ENCODE measurements at regions of chr7 and their contacts with region 1.

Region 1: DNA sequence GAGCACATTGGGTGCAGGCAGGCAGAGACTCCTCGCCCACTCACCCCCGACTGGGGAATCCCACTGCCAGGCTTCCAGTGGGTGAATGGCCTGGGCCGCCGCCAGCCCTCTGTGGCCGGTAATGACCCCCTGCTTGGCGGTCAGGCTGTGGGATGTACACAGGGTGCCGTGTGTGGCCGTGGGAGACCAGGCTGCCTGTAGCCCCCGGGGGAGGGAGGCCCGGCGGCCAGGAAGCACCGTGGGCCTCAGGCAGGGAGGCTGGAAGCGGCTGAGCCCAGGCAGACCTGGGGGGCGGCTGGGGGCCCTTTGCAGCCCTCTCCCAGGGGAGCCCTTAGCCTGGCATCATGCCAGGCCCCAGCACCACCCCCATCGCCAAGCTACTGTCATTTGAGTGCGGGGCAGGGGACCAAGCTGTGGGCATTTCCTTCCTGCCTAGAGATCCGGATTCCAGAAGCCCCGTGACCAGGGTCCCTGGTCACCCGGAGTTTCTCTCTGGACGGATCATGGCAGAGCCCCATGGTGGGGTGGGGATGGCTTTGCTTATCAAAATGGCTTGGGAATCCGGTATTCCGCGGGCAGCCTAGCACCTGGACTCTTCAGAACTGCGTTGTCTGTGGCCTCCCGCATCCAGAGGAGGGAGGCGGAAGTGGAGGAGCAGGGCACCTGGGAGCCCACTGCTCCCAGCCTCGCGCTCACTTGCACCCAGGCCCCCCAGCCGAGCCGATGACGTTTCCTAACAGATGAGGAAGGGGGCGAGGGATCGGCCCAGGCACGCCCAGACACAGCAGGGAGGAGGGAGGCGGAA is 1.1 kb downstream of the TTYH3 start:
- DNase-seq: peak in 8 of 14 experiments; percentile 18 to 65 (median 46)
- ATAC-seq: peak; percentile 9
- H3K4me3 ChIP-seq: peak overlapping the region; percentile 85
- H3K4me3 Mint-ChIP-seq: peak overlapping the region; percentile 92
- H3K27ac ChIP-seq: no peak overlapping the region
- H3K27ac Mint-ChIP-seq: peak overlapping the region; percentile 66
- H3K4me1 ChIP-seq: peaks cover 34% of the 10 kb centered on the region
- H3K4me1 Mint-ChIP-seq: peaks cover 20% of the 10 kb centered on the region
- H3K27me3 ChIP-seq: no peaks in the 10 kb centered on the region
- H3K27me3 Mint-ChIP-seq: no peaks in the 10 kb centered on the region
- CTCF ChIP-seq: no peak

Region 2: GRCh38 chr7:2403014-2403717 is 229.8 kb before region 1 on chr7 and contains the start of gene CHST12:
- CTCF ChIA-PET with region 1: no interaction called
- POLR2A ChIA-PET with region 1: no interaction called
- intact Hi-C with region 1: loop called in 1 of 2 experiments (anchors 5 kb)
- DNase-seq: peak; percentile 90 to 99 (median 93)
- ATAC-seq: peak; percentile 76
- H3K4me3 ChIP-seq: peak within 1 kb of the TSS; percentile 76
- H3K4me3 Mint-ChIP-seq: peak within 1 kb of the TSS; percentile 88
- H3K27ac ChIP-seq: peak within 1 kb of the TSS; percentile 35 to 38
- H3K27ac Mint-ChIP-seq: peak within 1 kb of the TSS; percentile 82
- H3K4me1 ChIP-seq: peaks cover 57% of the 10 kb centered on the region
- H3K4me1 Mint-ChIP-seq: peaks cover 54% of the 10 kb centered on the region
- H3K27me3 ChIP-seq: no peaks in the 10 kb centered on the region
- H3K27me3 Mint-ChIP-seq: no peaks in the 10 kb centered on the region
- CTCF ChIP-seq: no peak
- total RNA-seq, gene CHST12: 6.6 to 8.6 TPM

Region 3: DNA sequence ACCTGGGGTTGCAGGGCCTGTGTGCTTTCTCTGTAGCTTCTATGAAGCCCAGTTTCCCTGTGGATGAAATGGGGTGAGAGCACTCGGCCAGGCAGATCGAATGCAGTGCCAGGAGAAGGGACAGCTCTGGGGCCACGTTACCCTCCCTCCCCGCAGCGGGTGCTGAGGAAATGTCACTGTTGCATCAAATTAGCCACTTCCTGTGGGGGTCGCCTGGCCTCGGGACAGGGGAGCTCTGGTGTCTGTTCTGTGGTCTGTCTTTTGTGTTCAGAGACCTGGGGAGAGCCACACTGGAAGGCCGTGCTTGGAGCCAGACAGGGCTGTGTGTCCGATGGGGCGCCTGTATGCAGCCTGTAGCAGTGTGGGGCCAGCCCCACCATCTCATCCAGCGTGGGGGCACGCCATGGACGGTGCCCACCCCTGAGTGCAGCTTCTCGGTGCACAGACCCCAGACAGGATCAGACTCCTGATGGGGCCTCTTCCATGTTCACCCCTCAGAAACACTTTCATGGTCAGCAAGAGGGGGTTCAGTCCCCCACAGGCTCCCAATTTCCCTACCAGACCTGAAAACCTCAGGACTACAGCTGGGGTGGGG is 12.4 kb after region 1 on chr7:
- CTCF ChIA-PET with region 1: no interaction called
- POLR2A ChIA-PET with region 1: interaction called, 10 read pairs
- intact Hi-C with region 1: no loop called
- DNase-seq: peak in 4 of 14 experiments; percentile 9 to 69 (median 37)
- ATAC-seq: peak; percentile 54
- H3K4me3 ChIP-seq: peak overlapping the region; percentile 28
- H3K4me3 Mint-ChIP-seq: peak overlapping the region; percentile 42
- H3K27ac ChIP-seq: no peak overlapping the region
- H3K27ac Mint-ChIP-seq: no peak overlapping the region
- H3K4me1 ChIP-seq: peaks cover 23% of the 10 kb centered on the region
- H3K4me1 Mint-ChIP-seq: peaks cover 10% of the 10 kb centered on the region
- H3K27me3 ChIP-seq: no peaks in the 10 kb centered on the region
- H3K27me3 Mint-ChIP-seq: no peaks in the 10 kb centered on the region
- CTCF ChIP-seq: no peak

Region 4: GRCh38 chr7:3146571-3147226 is 513.8 kb after region 1 on chr7:
- CTCF ChIA-PET with region 1: no interaction called
- POLR2A ChIA-PET with region 1: no interaction called
- intact Hi-C with region 1: no loop called
- DNase-seq: peak in 1 of 14 experiments; percentile 8
- ATAC-seq: no peak
- H3K4me3 ChIP-seq: no peak overlapping the region
- H3K4me3 Mint-ChIP-seq: no peak overlapping the region
- H3K27ac ChIP-seq: no peak overlapping the region
- H3K27ac Mint-ChIP-seq: no peak overlapping the region
- H3K4me1 ChIP-seq: no peaks in the 10 kb centered on the region
- H3K4me1 Mint-ChIP-seq: peaks cover 14% of the 10 kb centered on the region
- H3K27me3 ChIP-seq: no peaks in the 10 kb centered on the region
- H3K27me3 Mint-ChIP-seq: no peaks in the 10 kb centered on the region
- CTCF ChIP-seq: no peak

Measured in CD4-positive, alpha-beta T cell (primary cell).